Dendritic cell treated with granulocyte-macrophage colony-stimulating factor and Interleukin-4, amounts not matched to agents 40 ng/mL and 50 ng/mL, for 4 days (primary cell): ENCODE measurements at regions of chr5 and their contacts with region 1.

Region 1: GRCh38 chr5:168494057-168494555 is 7.8 kb downstream of the RARS1 start:
- H3K4me3 Mint-ChIP-seq: no peak overlapping the region
- H3K27ac Mint-ChIP-seq: no peak overlapping the region
- H3K4me1 Mint-ChIP-seq: peaks cover 8% of the 10 kb centered on the region
- H3K27me3 Mint-ChIP-seq: no peaks in the 10 kb centered on the region

Region 2: GRCh38 chr5:168562279-168562678 is 68.2 kb after region 1 on chr5:
- intact Hi-C with region 1: loop called (anchors 5 kb)
- H3K4me3 Mint-ChIP-seq: no peak overlapping the region
- H3K27ac Mint-ChIP-seq: no peak overlapping the region
- H3K4me1 Mint-ChIP-seq: no peaks in the 10 kb centered on the region
- H3K27me3 Mint-ChIP-seq: no peaks in the 10 kb centered on the region

Region 3: DNA sequence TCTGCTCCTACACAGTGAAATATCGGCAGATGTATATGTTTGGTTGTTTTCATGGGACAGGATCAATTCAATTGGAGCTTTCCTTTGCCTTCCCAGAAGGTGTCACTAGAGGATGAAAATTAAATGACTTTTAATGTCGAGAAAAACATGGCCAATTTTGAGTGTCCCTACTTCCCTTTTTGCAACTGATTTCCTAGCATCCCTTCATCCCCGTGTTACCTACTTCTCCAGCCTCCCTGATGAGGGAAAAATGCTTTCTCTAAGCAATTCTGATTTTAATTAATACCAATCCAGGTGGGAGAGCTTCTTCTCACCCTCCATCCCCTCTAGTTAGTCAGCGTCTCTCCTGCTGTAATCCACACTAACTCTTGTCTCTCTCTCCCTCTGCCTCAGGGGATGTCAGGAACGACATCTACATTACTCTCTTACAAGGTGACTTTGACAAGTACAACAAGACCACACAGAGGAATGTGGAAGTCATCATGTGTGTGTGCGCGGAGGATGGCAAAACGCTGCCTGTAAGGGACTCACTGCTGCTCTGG is 1207.9 kb after region 1 on chr5:
- intact Hi-C with region 1: loop called (anchors 10 kb)
- H3K4me3 Mint-ChIP-seq: no peak overlapping the region
- H3K27ac Mint-ChIP-seq: peak overlapping the region; percentile 40
- H3K4me1 Mint-ChIP-seq: peaks cover 36% of the 10 kb centered on the region
- H3K27me3 Mint-ChIP-seq: no peaks in the 10 kb centered on the region